Astrocyte of the cerebellum (primary cell): ENCODE measurements at regions of chr14 and their contacts with region 1.

Region 1: DNA sequence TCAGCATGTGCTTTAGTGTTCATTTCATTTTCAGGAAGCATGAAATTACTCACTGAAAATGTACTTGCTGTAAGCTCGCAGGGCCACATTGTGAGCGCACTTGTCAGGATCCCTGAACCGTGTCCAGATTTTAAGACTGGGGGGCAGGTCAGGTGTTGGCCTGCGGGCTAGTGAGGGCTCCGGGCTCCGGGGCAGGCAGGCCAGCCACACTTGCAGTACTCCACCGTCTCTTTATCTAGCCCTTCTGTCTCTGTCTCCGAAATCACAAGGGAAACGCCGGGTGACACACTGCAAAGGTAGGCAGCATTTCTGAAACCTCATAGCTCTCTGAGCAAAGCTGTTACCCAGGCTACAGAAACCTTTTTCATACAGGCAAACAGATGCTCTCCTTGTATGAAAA is 98.7 kb downstream of the EML1 start:
- DNase-seq: no peak
- H3K4me3 ChIP-seq: no peak overlapping the region
- CTCF ChIP-seq: no peak

Region 2: DNA sequence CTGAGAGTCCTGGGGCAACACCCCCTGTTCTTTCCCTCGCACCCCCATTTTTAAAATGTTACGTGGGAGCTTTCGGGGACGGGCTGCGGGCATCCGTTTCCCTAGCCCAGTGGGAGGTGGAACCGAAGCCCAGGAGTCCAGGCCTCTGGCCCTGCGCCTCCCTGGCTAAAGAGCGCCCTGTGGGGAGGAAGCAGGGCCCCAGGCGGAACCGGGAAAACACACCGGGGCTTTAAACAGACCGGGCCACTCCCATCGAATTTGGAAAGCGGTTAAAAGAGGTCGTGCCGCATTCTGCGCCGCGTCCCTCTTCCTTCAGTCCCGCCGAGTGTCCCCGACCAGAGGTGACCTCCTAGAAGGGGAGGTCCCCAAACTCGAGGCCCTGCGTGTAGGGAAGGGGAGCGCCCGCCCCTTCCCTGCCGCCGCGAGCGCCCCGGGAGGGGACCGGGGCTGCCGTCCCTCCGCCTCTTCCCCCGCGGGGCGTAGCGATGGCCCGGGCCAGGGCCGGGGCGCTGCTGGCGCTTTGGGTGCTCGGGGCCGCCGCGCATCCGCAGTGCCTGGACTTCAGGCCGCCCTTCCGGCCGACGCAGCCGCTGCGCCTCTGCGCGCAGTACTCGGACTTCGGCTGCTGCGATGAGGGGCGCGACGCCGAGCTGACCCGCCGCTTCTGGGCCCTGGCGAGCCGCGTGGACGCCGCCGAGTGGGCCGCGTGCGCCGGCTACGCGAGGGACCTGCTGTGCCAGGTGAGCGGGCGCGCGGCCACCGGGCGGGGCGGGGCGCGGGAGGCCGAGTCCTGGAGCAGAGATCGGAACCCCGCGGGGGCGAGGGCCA is 247.0 kb before region 1 on chr14 and contains the start of gene HHIPL1:
- in situ Hi-C with region 1: no loop called
- DNase-seq: no peak
- H3K4me3 ChIP-seq: peak within 1 kb of the TSS; percentile 0
- CTCF ChIP-seq: no peak

Region 3: DNA sequence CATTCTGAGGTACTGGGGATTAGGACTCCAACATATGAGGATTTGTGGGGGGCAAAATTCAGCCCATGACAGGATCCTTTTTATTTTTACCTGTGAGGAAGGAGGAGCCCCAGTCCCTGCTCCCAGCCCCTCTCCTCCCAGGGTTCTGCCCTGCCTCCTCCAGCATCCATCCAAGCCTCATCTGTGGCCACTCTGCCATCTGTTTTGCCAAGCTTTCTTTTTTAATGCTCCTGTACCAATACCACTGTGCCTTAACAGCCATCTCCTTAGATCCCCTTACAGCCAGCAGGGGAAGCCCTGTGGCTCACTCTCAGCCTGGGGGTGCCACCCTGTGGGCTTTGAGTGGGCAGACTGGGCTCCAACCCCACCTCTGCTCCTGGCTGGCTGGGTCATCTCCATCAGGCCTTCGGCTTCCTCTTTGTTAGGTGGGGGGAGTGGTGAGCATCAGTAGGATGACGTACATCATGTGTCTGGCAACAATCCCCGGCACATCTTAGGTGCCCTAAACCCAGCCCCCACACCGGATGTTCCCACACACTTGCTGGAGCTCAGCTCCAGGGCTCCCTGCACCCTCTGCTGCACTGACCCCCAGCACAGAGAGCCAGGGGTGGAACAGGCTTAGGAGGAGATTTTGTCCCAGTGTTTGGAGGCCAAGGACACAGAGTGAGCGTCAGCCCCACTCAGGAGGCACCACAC is 167.6 kb before region 1 on chr14:
- in situ Hi-C with region 1: loop called (anchors 5 kb)
- DNase-seq: no peak
- H3K4me3 ChIP-seq: no peak overlapping the region
- CTCF ChIP-seq: no peak

Region 4: GRCh38 chr14:99853206-99853605 is 38.7 kb before region 1 on chr14:
- in situ Hi-C with region 1: loop called (anchors 5 kb)
- DNase-seq: no peak
- H3K4me3 ChIP-seq: no peak overlapping the region
- CTCF ChIP-seq: no peak